ENCODE measurements at regions of chr4 and their contacts with region 1.

Region 1: DNA sequence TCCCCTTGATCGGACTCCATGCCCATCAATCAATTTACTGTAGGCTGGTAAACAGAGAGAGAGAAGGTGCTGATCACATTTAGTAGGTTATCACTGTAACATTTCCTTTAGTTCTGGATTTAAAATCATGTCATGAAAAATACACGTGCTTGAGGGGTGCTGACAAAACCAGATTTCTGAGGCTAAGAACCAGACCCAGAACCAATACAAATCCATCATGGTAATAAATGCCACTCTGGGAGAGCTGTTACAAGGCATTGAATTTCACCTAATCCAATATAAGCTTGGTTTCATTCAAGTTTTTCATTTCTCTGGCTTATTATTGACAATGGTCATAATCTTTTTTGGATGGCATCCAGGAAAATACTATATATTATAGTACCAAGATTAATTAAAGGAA is 54.5 kb downstream of the FBXO8 start:
- DNase-seq: no peak
- ATAC-seq: no peak
- H3K4me3 ChIP-seq: no peak overlapping the region
- H3K4me3 Mint-ChIP-seq: no peak overlapping the region
- H3K27ac ChIP-seq: no peak overlapping the region
- H3K27ac Mint-ChIP-seq: no peak overlapping the region
- H3K4me1 ChIP-seq: no peaks in the 10 kb centered on the region
- H3K4me1 Mint-ChIP-seq: no peaks in the 10 kb centered on the region
- H3K27me3 ChIP-seq: peaks cover 2 to 8% of the 10 kb centered on the region in 2 experiments
- H3K27me3 Mint-ChIP-seq: peaks cover 0 to 12% of the 10 kb centered on the region in 2 donors

Region 2: GRCh38 chr4:173461170-173461569 is 767.8 kb before region 1 on chr4:
- CTCF ChIA-PET with region 1: no interaction called
- POLR2A ChIA-PET with region 1: interaction called in 1 of 2 experiments, 11 read pairs
- DNase-seq: no peak
- ATAC-seq: no peak
- H3K4me3 ChIP-seq: no peak overlapping the region
- H3K4me3 Mint-ChIP-seq: no peak overlapping the region
- H3K27ac ChIP-seq: no peak overlapping the region
- H3K27ac Mint-ChIP-seq: no peak overlapping the region
- H3K4me1 ChIP-seq: no peaks in the 10 kb centered on the region
- H3K4me1 Mint-ChIP-seq: no peaks in the 10 kb centered on the region
- H3K27me3 ChIP-seq: no peaks in the 10 kb centered on the region
- H3K27me3 Mint-ChIP-seq: no peaks in the 10 kb centered on the region

Measured in T-cell (primary cell).